ENCODE measurements at regions of chr11 and their contacts with region 1.

Region 1: DNA sequence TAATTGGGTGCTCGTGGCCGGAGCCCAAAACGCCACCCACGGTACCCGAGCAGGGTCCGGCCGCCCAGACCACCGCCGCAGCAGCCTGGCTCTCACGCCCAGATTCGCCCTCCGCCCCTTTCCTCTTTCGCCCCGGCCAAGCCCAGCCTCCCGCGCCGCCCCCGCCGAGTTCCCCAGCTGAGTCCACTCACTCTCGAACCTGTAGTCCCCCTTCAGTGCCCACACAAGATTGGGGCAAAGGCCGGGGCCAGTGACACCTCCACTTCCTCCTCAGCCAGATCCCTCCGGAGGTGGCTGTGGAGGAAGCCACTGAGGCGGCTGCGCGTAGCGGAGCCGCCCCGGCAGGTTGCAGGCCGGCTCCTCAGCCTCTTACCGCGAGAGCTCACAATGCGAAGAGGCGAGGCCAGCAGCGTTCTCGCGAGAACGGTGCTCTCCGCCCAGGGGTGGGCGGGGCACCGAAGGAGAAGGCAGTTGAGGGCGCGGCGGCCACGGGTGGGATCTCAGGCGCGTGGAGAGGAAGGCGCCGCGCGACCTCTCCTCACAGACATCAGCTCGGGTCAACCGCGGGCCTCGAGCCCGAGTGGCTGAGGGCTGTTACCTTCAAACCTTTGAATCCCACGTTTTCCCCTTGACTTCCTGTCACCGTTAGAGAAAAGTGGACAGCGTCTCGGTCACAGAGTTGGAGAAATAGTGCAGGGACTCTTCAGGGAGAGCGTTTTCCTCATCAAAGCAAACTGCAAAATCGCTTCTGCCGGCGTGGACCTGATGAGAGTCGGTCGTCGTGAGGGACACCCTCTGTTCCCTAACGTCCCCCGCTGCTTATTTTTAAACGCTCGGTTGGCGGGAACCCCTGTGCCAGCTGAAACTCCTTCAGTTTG is at the start of gene BTBD10:
- DNase-seq: peak; percentile 93
- H3K4me3 ChIP-seq: peak within 1 kb of the TSS; percentile 72 to 97 (median 84)
- H3K27ac ChIP-seq: peak within 1 kb of the TSS; percentile 80
- H3K4me1 ChIP-seq: peaks cover 28% of the 10 kb centered on the region
- H3K27me3 ChIP-seq: no peaks in the 10 kb centered on the region
- CTCF ChIP-seq: no peak
- total RNA-seq, gene BTBD10: 57.2 to 73.2 TPM

Region 2: DNA sequence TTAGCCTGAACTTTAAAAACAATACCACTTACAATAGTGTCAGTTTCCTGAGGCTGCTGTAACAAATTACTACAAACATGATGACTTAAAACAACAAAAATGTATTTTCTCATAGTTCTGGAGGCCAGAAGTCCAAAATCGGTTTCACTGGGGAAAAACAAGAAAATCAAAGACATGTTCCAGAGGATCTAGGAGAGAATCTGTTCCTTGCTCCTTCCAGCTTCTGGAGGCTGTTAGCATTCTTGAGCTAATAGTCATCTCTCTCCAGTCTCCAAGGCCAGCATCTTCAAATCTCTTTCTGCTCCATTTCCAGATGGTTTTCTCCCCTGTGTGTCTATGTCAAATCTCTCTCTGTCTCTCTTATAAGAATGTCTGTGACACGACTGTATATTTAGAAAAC is 856.5 kb before region 1 on chr11:
- CTCF ChIA-PET with region 1: interaction called, 16 read pairs
- dilution Hi-C with region 1: no loop called
- in situ Hi-C with region 1: no loop called
- intact Hi-C with region 1: no loop called
- DNase-seq: no peak
- H3K4me3 ChIP-seq: no peak overlapping the region
- H3K27ac ChIP-seq: no peak overlapping the region
- H3K4me1 ChIP-seq: no peaks in the 10 kb centered on the region
- H3K27me3 ChIP-seq: no peaks in the 10 kb centered on the region
- CTCF ChIP-seq: no peak

Region 3: DNA sequence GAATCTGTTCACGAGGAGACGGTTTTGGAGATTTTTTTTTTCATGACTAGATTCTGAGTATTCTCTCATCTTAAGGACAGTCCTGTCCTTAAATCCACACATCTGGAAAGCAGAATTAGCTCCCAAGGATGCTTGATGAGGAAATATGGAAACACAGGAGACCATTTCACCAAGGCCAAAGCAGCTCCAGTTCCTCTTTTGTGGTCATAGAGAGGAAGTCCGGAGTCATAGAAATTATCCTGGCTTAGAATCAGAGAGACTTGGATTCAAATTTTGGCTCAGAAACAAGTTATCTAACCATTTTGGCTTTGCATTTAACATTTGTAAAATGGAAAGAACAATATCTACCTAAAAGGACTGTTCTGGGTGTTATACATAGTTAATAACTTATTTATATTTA is 796.2 kb before region 1 on chr11:
- CTCF ChIA-PET with region 1: no interaction called
- dilution Hi-C with region 1: no loop called
- in situ Hi-C with region 1: no loop called
- intact Hi-C with region 1: no loop called
- DNase-seq: no peak
- H3K4me3 ChIP-seq: no peak overlapping the region
- H3K27ac ChIP-seq: no peak overlapping the region
- H3K4me1 ChIP-seq: no peaks in the 10 kb centered on the region
- H3K27me3 ChIP-seq: no peaks in the 10 kb centered on the region
- CTCF ChIP-seq: no peak

Region 4: DNA sequence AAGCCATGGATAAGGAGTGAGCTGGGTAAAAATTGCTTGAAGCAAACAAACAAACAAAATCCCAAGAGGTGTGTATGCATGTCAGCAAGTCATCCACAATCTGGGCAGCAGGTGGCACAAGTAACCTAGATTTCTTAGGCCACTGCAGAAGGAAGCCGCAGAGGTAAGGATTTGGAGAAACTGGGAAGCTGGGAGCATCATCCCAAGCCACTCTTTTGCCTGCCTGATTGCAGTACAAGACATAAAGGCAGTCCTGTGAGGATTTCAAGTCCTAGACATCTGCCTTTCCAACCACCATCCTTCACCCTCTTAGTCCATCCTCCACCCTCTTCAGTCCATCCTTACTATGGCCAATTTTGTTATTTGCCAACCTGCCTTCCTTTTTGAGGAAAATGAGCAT is 252.7 kb before region 1 on chr11:
- CTCF ChIA-PET with region 1: no interaction called
- dilution Hi-C with region 1: no loop called
- in situ Hi-C with region 1: no loop called
- intact Hi-C with region 1: loop called (anchors 1 kb)
- DNase-seq: peak; percentile 63
- H3K4me3 ChIP-seq: no peak overlapping the region
- H3K27ac ChIP-seq: no peak overlapping the region
- H3K4me1 ChIP-seq: peaks cover 33% of the 10 kb centered on the region
- H3K27me3 ChIP-seq: no peaks in the 10 kb centered on the region
- CTCF ChIP-seq: peak; percentile 77 to 79

Region 5: DNA sequence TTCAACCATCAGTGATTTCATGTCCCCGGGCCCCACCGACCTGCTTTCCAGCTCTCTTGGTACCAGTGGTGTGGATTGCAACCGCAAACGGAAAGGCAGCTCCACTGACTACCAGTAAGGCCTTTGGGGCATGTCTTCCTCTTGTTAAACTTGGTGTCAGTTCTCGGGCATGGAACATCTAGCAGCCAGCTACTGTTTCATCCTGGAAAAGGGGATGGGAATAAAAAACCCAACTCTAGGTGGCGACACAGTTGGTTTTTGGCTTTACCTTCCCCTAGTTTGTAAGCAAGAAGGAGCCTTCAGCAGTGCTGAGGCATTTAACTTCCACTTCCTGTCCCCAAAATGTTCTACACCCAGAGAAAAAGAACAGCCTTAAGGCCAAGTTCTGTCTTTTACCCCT is 108.8 kb before region 1 on chr11:
- CTCF ChIA-PET with region 1: no interaction called
- dilution Hi-C with region 1: no loop called
- in situ Hi-C with region 1: no loop called
- intact Hi-C with region 1: loop called (anchors 2 kb)
- DNase-seq: no peak
- H3K4me3 ChIP-seq: no peak overlapping the region
- H3K27ac ChIP-seq: no peak overlapping the region
- H3K4me1 ChIP-seq: no peaks in the 10 kb centered on the region
- H3K27me3 ChIP-seq: no peaks in the 10 kb centered on the region
- CTCF ChIP-seq: peak; percentile 31 to 47

Region 6: DNA sequence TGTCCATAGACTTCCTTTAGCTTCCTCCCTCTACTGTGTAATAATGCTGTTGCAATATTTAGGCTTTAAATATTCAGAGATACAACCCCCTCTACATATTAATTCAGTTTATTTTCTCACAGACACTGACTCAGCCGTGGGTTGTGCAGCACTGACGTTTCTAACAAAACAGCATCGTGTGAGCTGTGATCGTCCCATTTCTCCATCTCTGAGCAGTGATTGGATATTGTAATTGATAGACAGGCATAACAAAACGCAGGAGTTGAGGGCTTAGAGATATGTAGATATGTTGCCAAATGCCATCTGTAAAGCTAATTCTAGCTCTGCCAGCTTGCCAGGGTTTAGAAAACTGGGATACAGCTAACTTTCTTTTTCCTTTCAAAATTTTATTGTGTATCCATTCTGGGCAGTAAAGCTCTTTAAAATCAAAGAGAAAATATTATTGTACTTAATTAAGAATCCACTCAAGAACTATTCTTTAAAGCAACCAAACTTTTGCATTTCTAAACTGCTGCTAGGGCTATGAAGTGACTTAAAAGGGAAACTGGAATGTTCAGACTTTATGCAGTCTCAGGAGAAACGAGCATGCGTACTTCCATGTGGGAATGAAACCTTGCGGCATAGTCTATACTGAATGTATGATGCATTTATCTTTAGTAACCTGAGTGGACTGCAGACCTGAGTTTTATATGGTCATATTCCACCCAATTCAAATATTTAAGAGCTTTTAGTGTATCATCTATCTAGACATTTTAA is 22.9 kb before region 1 on chr11:
- CTCF ChIA-PET with region 1: interaction called, 3 read pairs
- dilution Hi-C with region 1: no loop called
- in situ Hi-C with region 1: no loop called
- intact Hi-C with region 1: loop called (anchors 2 kb)
- DNase-seq: peak; percentile 93
- H3K4me3 ChIP-seq: peak overlapping the region; percentile 39 to 63 (median 51)
- H3K27ac ChIP-seq: peak overlapping the region; percentile 85
- H3K4me1 ChIP-seq: peaks cover 15% of the 10 kb centered on the region
- H3K27me3 ChIP-seq: no peaks in the 10 kb centered on the region
- CTCF ChIP-seq: no peak

Measured in mammary epithelial cell (primary cell).